Tibial artery (tissue), 4 donors: ENCODE measurements at regions of chr6 and their contacts with region 1.

Region 1: GRCh38 chr6:123715006-123715875 is 78.5 kb upstream of the TRDN start:
- DNase-seq: no peak
- H3K4me3 ChIP-seq: no peak overlapping the region
- H3K27ac ChIP-seq: no peak overlapping the region
- H3K4me1 ChIP-seq: no peaks in the 10 kb centered on the region
- H3K27me3 ChIP-seq: no peaks in the 10 kb centered on the region
- CTCF ChIP-seq: peak; percentile 57 to 79

Region 2: DNA sequence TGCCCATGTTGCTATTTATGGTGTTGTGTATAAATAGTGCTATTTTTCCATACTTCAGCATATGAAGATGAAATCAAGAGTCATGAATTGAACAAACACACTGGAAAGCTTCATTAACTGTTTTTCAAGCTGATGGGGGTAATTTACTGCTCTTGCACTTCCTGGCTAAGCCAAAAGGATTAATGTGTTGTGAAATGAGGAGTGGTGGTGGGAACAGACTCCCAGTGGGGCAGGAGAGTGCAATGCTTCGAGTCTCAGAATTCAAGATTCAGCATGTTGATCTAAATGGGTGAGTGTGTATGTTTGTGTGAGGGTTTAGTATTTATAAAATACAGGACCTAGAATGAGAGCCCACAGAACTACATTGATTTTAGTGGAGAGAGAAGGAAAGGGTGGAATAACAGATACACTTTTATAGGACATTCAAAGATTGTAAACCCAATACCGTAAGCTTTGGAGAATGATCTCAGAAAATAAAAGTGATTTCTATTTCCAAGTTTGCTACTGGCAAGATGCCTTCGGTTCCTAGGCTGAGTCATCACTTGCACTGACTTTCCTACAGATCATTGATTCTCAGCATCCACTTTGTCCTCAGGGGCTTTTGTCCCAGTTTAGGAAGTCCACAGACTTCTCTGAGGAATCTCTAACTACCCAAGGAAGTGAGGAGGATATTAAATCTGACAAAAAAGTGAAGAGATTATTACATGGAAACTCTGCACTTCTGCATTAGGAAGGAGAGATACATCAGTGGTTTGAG is 382.1 kb before region 1 on chr6:
- intact Hi-C with region 1: no loop called
- DNase-seq: no peak
- H3K4me3 ChIP-seq: no peak overlapping the region
- H3K27ac ChIP-seq: no peak overlapping the region
- H3K4me1 ChIP-seq: no peaks in the 10 kb centered on the region
- H3K27me3 ChIP-seq: no peaks in the 10 kb centered on the region
- CTCF ChIP-seq: no peak

Region 3: GRCh38 chr6:123415844-123416468 is 299.3 kb before region 1 on chr6:
- intact Hi-C with region 1: loop called (anchors 2 kb)
- DNase-seq: peak in 1 of 2 donors; percentile 50
- H3K4me3 ChIP-seq: no peak overlapping the region
- H3K27ac ChIP-seq: no peak overlapping the region
- H3K4me1 ChIP-seq: peaks cover 0 to 21% (median 0%) of the 10 kb centered on the region in 4 donors
- H3K27me3 ChIP-seq: no peaks in the 10 kb centered on the region
- CTCF ChIP-seq: peak; percentile 74 to 83

Region 4: DNA sequence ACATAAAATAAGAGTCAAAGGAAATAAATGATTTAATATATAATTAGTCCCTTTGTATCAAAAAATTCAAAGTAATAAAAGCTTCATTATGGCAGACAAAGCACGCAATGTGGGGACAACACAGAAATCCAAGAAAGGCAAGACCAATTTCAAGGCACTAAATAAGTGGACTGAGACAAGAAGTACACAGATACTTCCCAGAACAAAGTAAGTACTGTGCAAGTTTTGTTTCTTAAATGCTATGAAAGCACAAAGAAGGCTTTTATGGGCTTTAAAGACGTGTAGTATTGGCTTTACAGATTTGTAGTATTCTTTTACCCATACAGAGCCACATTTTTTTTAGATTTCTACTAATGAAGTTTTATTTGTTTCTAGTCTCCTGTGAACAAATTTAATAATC is 253.1 kb before region 1 on chr6:
- intact Hi-C with region 1: no loop called
- DNase-seq: no peak
- H3K4me3 ChIP-seq: no peak overlapping the region
- H3K27ac ChIP-seq: no peak overlapping the region
- H3K4me1 ChIP-seq: no peaks in the 10 kb centered on the region
- H3K27me3 ChIP-seq: no peaks in the 10 kb centered on the region
- CTCF ChIP-seq: no peak

Region 5: DNA sequence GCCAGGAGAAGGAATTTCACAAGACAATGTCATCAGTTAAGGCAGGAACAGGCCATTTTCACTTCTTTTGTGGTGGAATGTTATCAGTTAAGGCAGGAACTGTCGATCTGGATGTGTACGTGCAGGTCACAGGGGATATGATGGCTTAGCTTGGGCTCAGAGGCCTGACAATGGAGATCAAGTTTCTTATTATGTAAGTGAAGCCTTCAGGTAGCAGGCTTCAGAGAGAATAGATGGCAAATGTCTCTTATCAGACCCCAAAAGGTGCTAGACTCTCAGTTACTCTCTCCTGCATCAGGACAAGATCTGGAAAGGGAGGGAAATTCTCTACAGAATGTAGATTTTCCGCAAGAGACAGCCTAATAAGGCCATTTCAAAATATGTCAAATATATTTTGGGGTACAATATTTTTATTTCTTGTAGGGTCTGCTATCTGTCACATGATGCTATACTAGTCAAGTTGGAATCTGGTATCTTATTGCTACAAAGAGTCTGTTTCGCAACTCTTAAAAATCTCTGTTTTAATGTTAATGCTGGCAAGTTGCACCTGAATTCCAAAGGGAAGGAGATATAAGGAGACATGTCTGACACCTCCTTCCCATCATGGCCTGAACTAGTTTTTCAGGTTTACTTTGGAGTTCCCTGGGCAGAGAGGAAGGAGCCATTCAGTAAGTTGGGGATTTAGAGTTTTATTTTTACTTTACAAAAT is 127.2 kb before region 1 on chr6:
- intact Hi-C with region 1: no loop called
- DNase-seq: no peak
- H3K4me3 ChIP-seq: no peak overlapping the region
- H3K27ac ChIP-seq: no peak overlapping the region
- H3K4me1 ChIP-seq: no peaks in the 10 kb centered on the region
- H3K27me3 ChIP-seq: no peaks in the 10 kb centered on the region
- CTCF ChIP-seq: no peak